ENCODE measurements at regions of chr6 and their contacts with region 1.

Region 1: GRCh38 chr6:105964979-105965760 is 121.0 kb upstream of the PRDM1 start:
- DNase-seq: no peak
- ATAC-seq: no peak
- H3K4me3 ChIP-seq: no peak overlapping the region
- H3K27ac ChIP-seq: no peak overlapping the region; the same call in 1 of the 2 replicates
- H3K4me1 ChIP-seq: no peaks in the 10 kb centered on the region
- H3K27me3 ChIP-seq: no peaks in the 10 kb centered on the region
- CTCF ChIP-seq: no peak

Region 2: GRCh38 chr6:105992315-105992961 is 27.3 kb after region 1 on chr6:
- CTCF ChIA-PET with region 1: no interaction called
- POLR2A ChIA-PET with region 1: interaction called, 17 read pairs
- in situ Hi-C with region 1: no loop called
- intact Hi-C with region 1: no loop called
- DNase-seq: peak; percentile 36
- ATAC-seq: peak; percentile 97
- H3K4me3 ChIP-seq: peak overlapping the region; percentile 87 to 91
- H3K27ac ChIP-seq: peak overlapping the region; percentile 83
- H3K4me1 ChIP-seq: peaks cover 9% of the 10 kb centered on the region; the same call in 1 of the 2 replicates
- H3K27me3 ChIP-seq: no peaks in the 10 kb centered on the region; the same call in 1 of the 2 replicates
- CTCF ChIP-seq: no peak

Region 3: DNA sequence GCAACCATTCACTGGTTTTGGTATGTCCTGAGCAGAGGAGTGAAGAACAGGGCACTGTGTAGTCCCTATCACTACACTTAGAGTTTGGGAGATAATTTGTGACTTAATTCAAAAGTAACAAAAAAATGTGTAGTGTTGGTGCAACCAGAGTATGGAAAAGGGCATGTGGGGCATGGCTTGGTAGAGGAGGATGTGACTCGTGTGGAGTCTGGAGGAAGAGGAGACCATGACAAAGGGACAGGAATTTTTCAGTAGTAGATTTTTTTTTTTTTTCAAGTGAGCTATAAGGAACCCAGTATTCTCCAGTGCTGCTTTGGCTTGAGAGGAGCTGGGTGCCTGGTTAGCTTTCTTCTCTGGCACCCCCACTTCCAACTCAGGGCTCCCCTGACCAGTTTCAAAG is 1068.0 kb after region 1 on chr6:
- CTCF ChIA-PET with region 1: no interaction called
- POLR2A ChIA-PET with region 1: no interaction called
- in situ Hi-C with region 1: no loop called
- intact Hi-C with region 1: no loop called
- DNase-seq: no peak
- ATAC-seq: no peak
- H3K4me3 ChIP-seq: no peak overlapping the region
- H3K27ac ChIP-seq: no peak overlapping the region
- H3K4me1 ChIP-seq: no peaks in the 10 kb centered on the region
- H3K27me3 ChIP-seq: no peaks in the 10 kb centered on the region
- CTCF ChIP-seq: no peak